ENCODE measurements at regions of chr19 and their contacts with region 1.

Region 1: DNA sequence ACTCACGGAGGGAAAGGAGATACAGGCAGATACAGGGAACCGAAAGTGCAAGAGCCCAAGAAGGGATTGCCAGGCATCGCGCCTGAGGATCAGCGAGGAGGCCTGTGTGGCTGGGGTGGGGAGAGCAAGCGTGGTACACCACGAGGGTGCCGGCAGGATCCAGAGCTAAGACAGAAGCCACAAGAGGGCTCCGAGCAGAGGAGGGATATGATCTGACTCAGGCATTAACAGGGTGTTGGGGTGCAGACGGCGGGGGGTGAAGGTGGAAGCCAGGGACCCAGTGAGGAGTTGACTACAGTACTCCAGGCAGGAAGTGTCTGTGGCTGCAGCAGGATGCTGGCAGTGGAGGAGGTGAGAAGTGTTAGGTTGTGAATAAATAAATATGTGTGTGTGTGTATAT is 5.4 kb upstream of the PPP1R37 start:
- DNase-seq: peak; percentile 83
- ATAC-seq: peak; percentile 76
- H3K4me3 Mint-ChIP-seq: peak overlapping the region; percentile 57
- H3K27ac Mint-ChIP-seq: peak overlapping the region; percentile 95
- H3K4me1 Mint-ChIP-seq: peaks cover 45% of the 10 kb centered on the region
- H3K27me3 Mint-ChIP-seq: no peaks in the 10 kb centered on the region

Region 2: DNA sequence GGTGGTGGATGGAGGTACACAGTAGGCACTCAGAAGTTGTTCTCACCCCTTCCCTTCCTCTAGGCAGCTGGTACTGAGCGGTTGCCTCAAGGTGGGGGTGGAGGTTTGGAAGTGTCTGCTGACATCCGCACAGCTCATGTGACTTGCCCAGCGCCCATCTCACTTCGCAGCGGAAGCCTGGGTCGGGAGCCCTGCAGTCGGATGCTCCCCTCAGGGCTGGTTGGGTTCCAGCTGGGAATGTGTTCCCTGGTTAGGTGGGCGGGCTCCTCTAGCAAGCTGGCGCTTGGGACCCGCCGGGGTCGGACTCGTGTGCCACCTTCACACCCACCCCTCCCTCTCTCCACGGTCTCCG is 15.6 kb after region 1 on chr19:
- CTCF ChIA-PET with region 1: interaction called, 12 read pairs
- POLR2A ChIA-PET with region 1: interaction called, 29 read pairs
- DNase-seq: peak; percentile 71
- ATAC-seq: peak; percentile 85
- H3K4me3 Mint-ChIP-seq: peak overlapping the region; percentile 25
- H3K27ac Mint-ChIP-seq: peak overlapping the region; percentile 80
- H3K4me1 Mint-ChIP-seq: peaks cover 52% of the 10 kb centered on the region
- H3K27me3 Mint-ChIP-seq: no peaks in the 10 kb centered on the region